Naive thymus-derived CD8-positive, alpha-beta T cell (primary cell): ENCODE measurements at regions of chr12 and their contacts with region 1.

Region 1: DNA sequence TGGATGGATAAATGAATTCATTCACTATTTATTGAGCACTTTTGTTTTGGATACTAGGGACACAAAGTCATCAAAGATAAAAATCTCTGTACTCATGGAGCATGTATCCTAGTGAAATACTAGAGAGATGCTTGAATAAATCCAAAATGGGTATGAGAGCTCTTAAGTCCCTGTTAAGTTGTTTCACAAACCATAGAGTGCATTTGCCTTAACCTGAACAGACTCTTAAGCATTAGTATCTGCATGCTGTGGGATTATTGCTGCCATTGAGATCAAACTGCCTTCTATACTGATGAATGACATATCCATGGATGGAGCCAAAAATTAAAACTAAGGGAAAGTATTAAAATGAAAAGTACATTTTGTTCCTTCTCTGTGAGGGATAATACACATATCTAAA is 206.5 kb upstream of the KRR1 start:
- DNase-seq: no peak
- ATAC-seq: no peak
- H3K4me3 Mint-ChIP-seq: no peak overlapping the region
- H3K27ac Mint-ChIP-seq: no peak overlapping the region
- H3K4me1 Mint-ChIP-seq: peaks cover 2 to 14% (median 8%) of the 10 kb centered on the region in 4 donors
- H3K27me3 Mint-ChIP-seq: peaks cover 0 to 7% (median 0%) of the 10 kb centered on the region in 5 donors

Region 2: DNA sequence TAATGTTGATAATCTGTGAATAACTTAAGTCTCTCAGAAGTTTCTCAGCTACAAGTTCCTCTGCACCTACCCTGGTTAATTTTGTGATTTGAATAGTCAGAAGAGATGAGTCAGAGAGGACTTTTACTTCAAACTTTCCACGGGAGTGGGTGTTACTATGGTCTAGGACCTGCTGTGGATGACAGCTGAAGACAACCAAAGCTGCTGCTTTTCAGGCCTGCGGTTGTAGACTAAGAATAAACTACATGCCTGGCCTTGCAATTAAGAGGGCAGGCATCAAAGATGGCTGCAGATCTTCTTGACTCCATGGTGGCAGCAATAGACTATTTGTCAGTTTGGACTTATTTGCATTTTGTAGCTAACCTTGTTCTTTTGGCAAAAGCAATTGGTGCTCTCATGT is 20.6 kb after region 1 on chr12:
- POLR2A ChIA-PET with region 1: no interaction called
- DNase-seq: no peak
- ATAC-seq: no peak
- H3K4me3 Mint-ChIP-seq: no peak overlapping the region
- H3K27ac Mint-ChIP-seq: no peak overlapping the region
- H3K4me1 Mint-ChIP-seq: peaks cover 0 to 4% (median 0%) of the 10 kb centered on the region in 4 donors
- H3K27me3 Mint-ChIP-seq: peaks cover 6 to 12% (median 8%) of the 10 kb centered on the region in 5 donors

Region 3: GRCh38 chr12:76083904-76084862 is 366.3 kb after region 1 on chr12 and contains the start of gene NAP1L1:
- POLR2A ChIA-PET with region 1: interaction called, 11 read pairs
- DNase-seq: peak; percentile 89 to 99 (median 97)
- ATAC-seq: peak; percentile 81
- H3K4me3 Mint-ChIP-seq: peak within 1 kb of the TSS; percentile 95 to 100 (median 99)
- H3K27ac Mint-ChIP-seq: peak within 1 kb of the TSS; percentile 98 to 100 (median 100)
- H3K4me1 Mint-ChIP-seq: peaks cover 24 to 64% (median 60%) of the 10 kb centered on the region in 4 donors
- H3K27me3 Mint-ChIP-seq: no peaks in the 10 kb centered on the region
- polyA plus RNA-seq, gene NAP1L1: 199 to 224 (median 210) TPM